Activated CD4-positive, alpha-beta T cell treated with anti-CD3 and anti-CD28 coated beads, Interleukin-2, amount 10 ng/mL, durations not matched to agents 24 days and 14 days (primary cell): ENCODE measurements at regions of chr2 and their contacts with region 1.

Region 1: DNA sequence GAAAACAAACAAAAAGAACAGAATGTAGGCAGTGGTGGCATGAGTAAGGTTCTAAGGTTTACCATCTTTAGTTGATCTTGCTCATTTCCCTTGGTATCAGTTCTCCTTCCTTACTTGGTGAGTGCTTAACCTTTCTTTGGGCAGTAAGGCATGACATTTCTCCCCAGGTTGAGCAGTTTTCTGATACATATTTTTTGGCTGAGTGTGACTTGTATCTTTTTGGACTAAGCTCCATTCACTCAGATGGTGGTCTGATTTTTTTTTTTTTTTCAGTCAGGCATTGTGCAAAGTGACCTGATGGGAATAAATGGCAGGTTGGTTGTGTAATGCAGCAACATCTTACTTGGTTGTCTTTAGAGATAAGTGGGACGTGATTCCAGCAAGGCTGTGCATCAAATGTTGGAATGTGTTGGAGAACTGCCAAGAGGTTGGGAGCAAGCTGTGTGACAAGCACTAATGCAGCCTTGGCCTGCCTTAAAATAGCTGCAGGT is 15.1 kb downstream of the SPTBN1 start:
- DNase-seq: peak; percentile 29
- H3K4me3 Mint-ChIP-seq: no peak overlapping the region
- H3K27ac Mint-ChIP-seq: no peak overlapping the region
- H3K4me1 Mint-ChIP-seq: no peaks in the 10 kb centered on the region
- H3K27me3 Mint-ChIP-seq: peaks cover 5% of the 10 kb centered on the region

Region 2: DNA sequence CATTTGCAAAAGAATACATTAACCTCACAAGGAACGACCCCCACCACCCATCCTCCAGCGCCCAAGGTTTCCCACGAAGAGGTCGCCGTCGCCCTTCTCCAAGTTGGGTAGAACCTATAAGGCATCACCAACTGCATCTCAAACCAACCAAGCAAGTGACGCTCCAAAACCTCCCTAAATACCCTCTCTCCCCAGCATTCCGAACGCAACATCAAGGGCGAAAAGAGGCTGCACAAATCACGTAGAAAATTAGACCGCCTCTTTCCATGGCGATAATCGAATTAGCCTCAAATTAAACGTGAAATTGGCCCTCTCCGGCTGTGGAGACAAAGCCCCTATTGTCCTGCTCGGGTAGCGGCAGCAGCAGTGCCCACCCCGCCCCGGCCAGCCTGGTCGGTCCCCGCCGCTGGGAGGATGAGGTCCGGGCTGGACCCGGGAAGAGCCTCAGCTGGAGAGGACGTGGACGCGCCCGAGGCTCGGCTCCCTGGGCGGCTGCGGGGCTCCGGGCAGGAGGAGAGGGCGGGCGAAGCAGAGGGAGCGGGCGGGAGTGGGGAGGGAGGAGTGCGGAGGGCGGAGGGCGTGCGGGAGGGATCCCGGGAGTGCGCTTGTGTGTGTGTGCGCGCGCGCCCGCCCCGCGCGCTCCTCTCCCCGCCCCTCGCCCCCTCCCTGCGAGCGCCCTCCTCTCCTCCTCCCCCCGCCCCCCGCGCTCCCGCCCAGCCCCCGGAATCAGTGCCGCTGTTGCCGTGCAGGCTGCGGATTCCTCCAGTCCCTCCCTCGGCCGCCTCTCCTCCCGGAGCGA is 15.5 kb before region 1 on chr2 and contains the start of gene SPTBN1:
- intact Hi-C with region 1: no loop called
- DNase-seq: peak; percentile 61
- H3K4me3 Mint-ChIP-seq: peak within 1 kb of the TSS; percentile 87
- H3K27ac Mint-ChIP-seq: no peak within 1 kb of the TSS
- H3K4me1 Mint-ChIP-seq: peaks cover 10% of the 10 kb centered on the region
- H3K27me3 Mint-ChIP-seq: peaks cover 60% of the 10 kb centered on the region
- total RNA-seq, gene SPTBN1: 52.6 and 53.8 TPM in 2 replicates

Region 3: GRCh38 chr2:54490863-54491262 is 19.6 kb after region 1 on chr2:
- intact Hi-C with region 1: loop called (anchors 1 kb)
- DNase-seq: no peak
- H3K4me3 Mint-ChIP-seq: no peak overlapping the region
- H3K27ac Mint-ChIP-seq: no peak overlapping the region
- H3K4me1 Mint-ChIP-seq: no peaks in the 10 kb centered on the region
- H3K27me3 Mint-ChIP-seq: peaks cover 15% of the 10 kb centered on the region